CD4-positive, alpha-beta memory T cell (primary cell): ENCODE measurements at regions of chr6 and their contacts with region 1.

Region 1: DNA sequence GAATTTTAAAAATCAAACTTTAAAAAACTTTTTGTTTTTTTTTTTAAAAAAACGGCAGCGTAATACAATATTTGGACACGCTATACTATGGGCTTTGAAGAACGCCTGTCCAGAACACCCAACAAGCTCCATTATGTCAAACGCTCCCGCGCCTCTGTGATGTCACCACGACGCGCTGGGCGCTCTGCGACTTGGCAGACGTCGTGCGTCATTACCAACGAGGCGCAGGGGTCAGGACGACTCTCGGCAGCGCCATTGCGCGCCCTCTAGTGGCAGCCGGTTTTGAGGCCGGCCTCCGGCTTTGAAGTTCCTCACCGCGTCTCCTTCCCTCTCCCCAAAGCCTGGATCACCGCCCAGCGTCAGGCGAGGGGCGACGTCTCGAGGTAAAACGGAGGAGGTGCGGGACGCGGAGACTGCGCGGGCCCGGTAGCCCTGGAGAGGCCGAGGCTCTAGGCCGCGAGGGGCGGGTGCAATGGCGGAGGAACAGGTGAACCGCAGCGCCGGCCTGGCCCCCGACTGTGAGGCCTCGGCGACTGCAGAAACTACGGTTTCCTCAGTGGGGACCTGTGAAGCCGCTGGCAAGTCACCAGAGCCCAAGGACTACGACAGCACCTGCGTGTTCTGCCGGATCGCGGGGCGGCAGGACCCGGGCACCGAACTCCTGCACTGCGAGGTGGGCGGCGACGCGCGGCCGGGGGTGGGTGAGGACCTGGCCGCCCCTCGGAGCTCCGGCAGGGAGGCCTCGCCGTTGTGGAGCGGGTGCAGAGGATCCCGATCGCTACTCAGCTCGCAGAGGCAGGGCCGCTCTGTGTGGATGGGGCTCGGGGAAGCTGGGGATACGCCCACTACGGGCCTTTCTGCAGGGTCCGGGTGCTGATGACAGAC is at the start of gene HINT3:
- DNase-seq: peak; percentile 96 to 98 (median 97)
- H3K4me3 ChIP-seq: peak within 1 kb of the TSS; percentile 60 to 94
- H3K4me3 Mint-ChIP-seq: peak within 1 kb of the TSS in 2 of 8 donors; percentile 66 to 67
- H3K27ac ChIP-seq: peak within 1 kb of the TSS; percentile 95
- H3K27ac Mint-ChIP-seq: no peak within 1 kb of the TSS
- H3K4me1 ChIP-seq: peaks cover 44% of the 10 kb centered on the region
- H3K4me1 Mint-ChIP-seq: peaks cover 3 to 25% (median 7%) of the 10 kb centered on the region in 4 donors
- H3K27me3 ChIP-seq: no peaks in the 10 kb centered on the region
- H3K27me3 Mint-ChIP-seq: no peaks in the 10 kb centered on the region
- total RNA-seq, gene HINT3: 10.6 to 12.7 TPM

Region 2: GRCh38 chr6:124795643-124796463 is 1160.9 kb before region 1 on chr6:
- CTCF ChIA-PET with region 1: no interaction called
- POLR2A ChIA-PET with region 1: no interaction called
- intact Hi-C with region 1: no loop called
- DNase-seq: no peak
- H3K4me3 ChIP-seq: no peak overlapping the region
- H3K4me3 Mint-ChIP-seq: no peak overlapping the region
- H3K27ac ChIP-seq: no peak overlapping the region
- H3K27ac Mint-ChIP-seq: no peak overlapping the region
- H3K4me1 ChIP-seq: no peaks in the 10 kb centered on the region
- H3K4me1 Mint-ChIP-seq: no peaks in the 10 kb centered on the region
- H3K27me3 ChIP-seq: no peaks in the 10 kb centered on the region
- H3K27me3 Mint-ChIP-seq: no peaks in the 10 kb centered on the region

Region 3: GRCh38 chr6:125314019-125314581 is 642.6 kb before region 1 on chr6:
- CTCF ChIA-PET with region 1: interaction called, 7 read pairs
- POLR2A ChIA-PET with region 1: interaction called, 3 read pairs
- intact Hi-C with region 1: loop called (anchors 1 kb)
- DNase-seq: peak in 2 of 5 donors; percentile 31 to 36
- H3K4me3 ChIP-seq: no peak overlapping the region
- H3K4me3 Mint-ChIP-seq: no peak overlapping the region
- H3K27ac ChIP-seq: no peak overlapping the region
- H3K27ac Mint-ChIP-seq: no peak overlapping the region
- H3K4me1 ChIP-seq: no peaks in the 10 kb centered on the region
- H3K4me1 Mint-ChIP-seq: peaks cover 0 to 2% (median 0%) of the 10 kb centered on the region in 4 donors
- H3K27me3 ChIP-seq: peaks cover 7% of the 10 kb centered on the region
- H3K27me3 Mint-ChIP-seq: peaks cover 6 to 18% of the 10 kb centered on the region in 2 donors

Region 4: DNA sequence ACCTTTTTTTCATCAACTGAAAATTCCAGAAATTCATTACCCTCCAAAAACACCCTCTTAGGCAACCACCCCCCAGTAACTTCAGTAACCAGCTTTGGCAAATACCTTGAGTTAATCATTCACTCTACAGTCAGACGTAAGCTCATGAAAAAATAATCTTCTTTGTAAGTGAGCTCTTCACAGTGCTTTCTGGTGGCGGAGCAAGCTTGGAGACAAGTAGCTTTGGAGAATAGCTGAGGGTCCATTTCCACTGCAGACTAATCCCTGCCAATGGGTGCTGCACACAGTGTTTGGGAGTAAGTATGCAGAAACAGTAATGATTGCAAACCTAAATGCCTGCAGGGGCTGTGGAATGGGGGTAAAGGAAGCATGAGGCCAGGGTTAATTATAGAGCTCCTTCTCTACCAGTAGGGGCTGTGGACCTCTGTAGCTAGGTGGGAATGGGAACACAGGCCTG is 57.0 kb before region 1 on chr6:
- CTCF ChIA-PET with region 1: interaction called, 10 read pairs
- POLR2A ChIA-PET with region 1: no interaction called
- intact Hi-C with region 1: no loop called
- DNase-seq: no peak
- H3K4me3 ChIP-seq: no peak overlapping the region
- H3K4me3 Mint-ChIP-seq: no peak overlapping the region
- H3K27ac ChIP-seq: no peak overlapping the region
- H3K27ac Mint-ChIP-seq: peak overlapping the region in 1 of 7 donors; percentile 1
- H3K4me1 ChIP-seq: peaks cover 10% of the 10 kb centered on the region
- H3K4me1 Mint-ChIP-seq: peaks cover 7 to 25% (median 12%) of the 10 kb centered on the region in 4 donors
- H3K27me3 ChIP-seq: no peaks in the 10 kb centered on the region
- H3K27me3 Mint-ChIP-seq: no peaks in the 10 kb centered on the region

Region 5: GRCh38 chr6:125931733-125932450 is 24.9 kb before region 1 on chr6:
- CTCF ChIA-PET with region 1: interaction called, 11 read pairs
- POLR2A ChIA-PET with region 1: no interaction called
- intact Hi-C with region 1: no loop called
- DNase-seq: no peak
- H3K4me3 ChIP-seq: no peak overlapping the region
- H3K4me3 Mint-ChIP-seq: no peak overlapping the region
- H3K27ac ChIP-seq: no peak overlapping the region
- H3K27ac Mint-ChIP-seq: peak overlapping the region in 4 of 7 donors; percentile 11 to 89 (median 44)
- H3K4me1 ChIP-seq: no peaks in the 10 kb centered on the region
- H3K4me1 Mint-ChIP-seq: peaks cover 0 to 4% (median 1%) of the 10 kb centered on the region in 4 donors
- H3K27me3 ChIP-seq: no peaks in the 10 kb centered on the region
- H3K27me3 Mint-ChIP-seq: no peaks in the 10 kb centered on the region

Region 6: GRCh38 chr6:125974214-125974866 is 17.6 kb after region 1 on chr6:
- CTCF ChIA-PET with region 1: interaction called, 44 read pairs
- POLR2A ChIA-PET with region 1: interaction called, 9 read pairs
- intact Hi-C with region 1: no loop called
- DNase-seq: peak in 4 of 5 donors; percentile 43 to 53 (median 46)
- H3K4me3 ChIP-seq: no peak overlapping the region
- H3K4me3 Mint-ChIP-seq: no peak overlapping the region
- H3K27ac ChIP-seq: no peak overlapping the region
- H3K27ac Mint-ChIP-seq: peak overlapping the region in 3 of 7 donors; percentile 14 to 33 (median 23)
- H3K4me1 ChIP-seq: no peaks in the 10 kb centered on the region
- H3K4me1 Mint-ChIP-seq: peaks cover 0 to 10% (median 9%) of the 10 kb centered on the region in 4 donors
- H3K27me3 ChIP-seq: no peaks in the 10 kb centered on the region
- H3K27me3 Mint-ChIP-seq: no peaks in the 10 kb centered on the region

Region 7: GRCh38 chr6:127266178-127266891 is 1309.6 kb after region 1 on chr6 and contains the start of gene RNF146:
- CTCF ChIA-PET with region 1: no interaction called
- POLR2A ChIA-PET with region 1: no interaction called
- intact Hi-C with region 1: loop called (anchors 1 kb)
- DNase-seq: peak; percentile 76 to 83 (median 77)
- H3K4me3 ChIP-seq: peak within 1 kb of the TSS; percentile 71 to 94
- H3K4me3 Mint-ChIP-seq: peak within 1 kb of the TSS; percentile 97 to 100 (median 100)
- H3K27ac ChIP-seq: peak within 1 kb of the TSS; percentile 94
- H3K27ac Mint-ChIP-seq: peak within 1 kb of the TSS; percentile 89 to 100 (median 99)
- H3K4me1 ChIP-seq: peaks cover 23% of the 10 kb centered on the region
- H3K4me1 Mint-ChIP-seq: peaks cover 25 to 42% (median 35%) of the 10 kb centered on the region in 4 donors
- H3K27me3 ChIP-seq: no peaks in the 10 kb centered on the region
- H3K27me3 Mint-ChIP-seq: peaks cover 0 to 2% of the 10 kb centered on the region in 2 donors
- total RNA-seq, gene RNF146: 36.4 to 39.9 TPM